PC-3 (cell line): ENCODE measurements at regions of chr4 and their contacts with region 1.

Region 1: GRCh38 chr4:26081795-26082498 is 167.9 kb downstream of the SMIM20 start:
- DNase-seq: peak; percentile 71
- ATAC-seq: peak; percentile 9; the same call in 1 of the 2 replicates
- H3K4me3 ChIP-seq: no peak overlapping the region
- H3K27ac ChIP-seq: no peak overlapping the region
- H3K4me1 ChIP-seq: peaks cover 46% of the 10 kb centered on the region
- H3K27me3 ChIP-seq: no peaks in the 10 kb centered on the region
- CTCF ChIP-seq: peak; percentile 76

Region 2: DNA sequence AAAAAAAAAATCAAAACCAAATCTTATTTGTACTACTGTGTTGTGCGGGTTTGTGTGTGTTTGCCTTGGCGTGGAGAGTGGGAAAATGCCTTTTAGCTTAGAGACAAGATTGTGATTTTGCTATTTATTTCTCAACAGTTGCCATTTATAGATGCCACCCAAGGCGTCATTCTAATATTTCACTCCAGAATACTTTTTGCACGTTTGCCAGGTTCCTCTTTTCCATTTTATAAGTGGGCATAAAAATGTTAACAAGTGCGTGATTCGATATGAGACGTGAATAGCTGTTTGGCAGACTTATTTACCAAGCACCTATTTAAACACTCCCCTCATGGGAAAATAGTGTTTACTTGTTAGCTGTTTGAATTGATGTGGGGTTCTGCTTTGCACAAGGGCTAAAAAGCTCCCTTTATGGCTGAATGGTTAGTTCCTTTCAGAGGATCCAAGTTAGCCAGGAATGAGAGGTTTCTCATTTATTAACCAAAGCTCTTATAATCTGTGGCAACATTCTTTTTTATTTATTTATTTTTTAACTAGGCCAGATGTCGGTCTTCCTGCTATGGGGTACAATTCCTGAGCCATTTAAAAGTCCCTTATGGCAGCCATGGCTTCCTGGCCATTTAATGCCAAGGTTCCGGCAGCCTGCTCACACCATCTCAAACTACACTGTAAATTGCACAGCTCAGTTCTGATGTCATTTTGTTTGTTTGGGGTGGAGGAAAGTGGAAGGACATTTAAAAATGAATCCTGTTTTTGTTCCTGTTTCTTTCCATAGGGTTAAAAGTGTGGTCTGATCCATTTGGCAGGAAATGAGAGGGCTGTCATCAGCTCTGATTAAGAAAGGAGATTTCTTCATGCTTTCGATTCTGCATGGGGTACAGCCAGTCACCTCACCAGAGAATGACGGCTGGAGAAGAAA is 153.3 kb before region 1 on chr4:
- CTCF ChIA-PET with region 1: no interaction called
- POLR2A ChIA-PET with region 1: no interaction called
- intact Hi-C with region 1: no loop called
- DNase-seq: no peak
- ATAC-seq: peak; percentile 33; the same call in 1 of the 2 replicates
- H3K4me3 ChIP-seq: no peak overlapping the region
- H3K27ac ChIP-seq: no peak overlapping the region
- H3K4me1 ChIP-seq: no peaks in the 10 kb centered on the region
- H3K27me3 ChIP-seq: no peaks in the 10 kb centered on the region
- CTCF ChIP-seq: no peak

Region 3: GRCh38 chr4:26126143-26126718 is 44.3 kb after region 1 on chr4:
- CTCF ChIA-PET with region 1: interaction called, 9 read pairs
- POLR2A ChIA-PET with region 1: no interaction called
- intact Hi-C with region 1: loop called (anchors 1 kb)
- DNase-seq: no peak
- ATAC-seq: no peak
- H3K4me3 ChIP-seq: no peak overlapping the region
- H3K27ac ChIP-seq: no peak overlapping the region
- H3K4me1 ChIP-seq: peaks cover 35% of the 10 kb centered on the region
- H3K27me3 ChIP-seq: no peaks in the 10 kb centered on the region
- CTCF ChIP-seq: no peak

Region 4: DNA sequence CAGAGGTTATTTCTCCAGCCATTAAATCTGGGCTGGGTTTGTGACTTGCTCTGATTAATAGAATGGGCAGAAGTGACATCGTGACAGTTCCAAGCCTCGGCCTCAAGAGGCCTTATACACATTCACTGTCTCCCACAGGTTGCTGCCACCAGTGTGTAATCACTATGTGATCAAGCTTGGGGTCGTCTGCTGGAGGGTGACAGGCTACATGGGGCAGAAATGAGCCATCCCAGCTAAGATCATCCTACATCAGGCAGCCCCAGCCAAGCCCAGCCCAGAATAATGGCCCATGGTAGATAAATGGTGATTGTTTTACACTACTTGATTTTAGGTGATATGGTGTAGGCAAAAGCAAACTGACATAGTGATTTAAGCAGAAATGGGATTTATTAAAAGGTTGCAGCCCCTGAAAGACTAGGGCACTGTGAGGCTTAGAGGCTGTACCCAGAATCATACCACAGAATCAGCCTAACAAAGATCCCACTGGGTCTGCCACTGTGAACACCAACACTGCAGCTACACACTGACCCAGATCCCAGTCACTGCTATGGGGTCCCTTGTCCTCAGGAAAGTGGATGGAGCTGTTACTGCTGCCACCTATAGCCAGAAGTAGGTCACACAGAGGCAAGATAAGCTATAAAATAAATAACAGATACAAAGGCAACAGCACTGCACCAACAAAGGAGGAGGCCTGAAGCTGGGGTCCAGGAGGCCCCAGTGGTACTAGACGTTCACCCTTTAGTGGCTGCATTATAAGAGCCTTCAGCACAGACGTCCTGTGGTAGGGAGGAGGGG is 79.3 kb after region 1 on chr4:
- CTCF ChIA-PET with region 1: interaction called, 3 read pairs
- POLR2A ChIA-PET with region 1: no interaction called
- intact Hi-C with region 1: loop called (anchors 1 kb)
- DNase-seq: peak; percentile 34
- ATAC-seq: peak; percentile 61; the same call in 1 of the 2 replicates
- H3K4me3 ChIP-seq: no peak overlapping the region
- H3K27ac ChIP-seq: no peak overlapping the region
- H3K4me1 ChIP-seq: no peaks in the 10 kb centered on the region
- H3K27me3 ChIP-seq: no peaks in the 10 kb centered on the region
- CTCF ChIP-seq: peak; percentile 61